ENCODE measurements at regions of chr9 and their contacts with region 1.

Region 1: DNA sequence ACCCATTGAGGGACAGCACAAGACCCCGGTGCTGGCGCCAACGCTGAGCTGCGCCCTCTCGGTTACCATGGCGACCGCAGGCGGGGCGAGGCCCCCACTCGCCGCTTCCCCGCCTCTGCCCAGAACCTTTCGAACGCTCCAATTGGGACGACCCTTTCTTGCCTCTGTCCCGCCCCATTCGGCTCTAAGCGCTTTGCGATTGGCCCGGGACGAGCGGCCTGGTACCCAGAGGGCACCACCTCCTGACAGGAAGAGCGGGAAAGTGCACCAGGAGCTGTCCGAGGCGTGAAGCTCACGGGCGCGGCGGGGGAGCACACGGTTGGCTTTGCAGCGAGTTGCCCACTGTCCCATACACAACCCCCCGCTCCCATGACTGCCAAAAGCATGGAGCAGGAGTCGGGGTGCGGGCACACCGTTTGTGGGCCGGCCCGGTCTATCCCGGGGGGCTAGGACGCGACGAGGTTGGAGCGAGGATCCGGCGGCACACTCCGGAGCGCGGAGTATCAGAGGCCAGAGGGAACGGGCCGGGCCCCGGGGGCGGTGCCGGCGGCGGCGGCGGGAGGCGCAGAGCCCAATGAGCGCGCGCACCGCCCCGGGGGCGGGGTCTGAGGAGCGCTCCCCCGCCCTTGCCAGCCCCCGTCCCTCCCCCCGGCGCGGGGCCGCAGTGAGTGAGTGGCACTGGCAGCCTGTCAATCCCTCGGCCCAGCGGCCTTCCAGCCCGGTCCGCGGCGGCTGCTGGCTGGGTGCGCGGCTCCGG is 978 bp upstream of the PBX3 start:
- DNase-seq: peak; percentile 96 to 98
- ATAC-seq: peak; percentile 95
- H3K4me3 ChIP-seq: peak overlapping the region; percentile 93 to 99
- H3K27ac ChIP-seq: peak overlapping the region; percentile 76 to 78
- H3K4me1 ChIP-seq: no peaks in the 10 kb centered on the region
- H3K27me3 ChIP-seq: no peaks in the 10 kb centered on the region

Region 2: GRCh38 chr9:125544988-125545651 is 201.1 kb before region 1 on chr9:
- intact Hi-C with region 1: loop called in 1 of 2 experiments (anchors 5 kb)
- DNase-seq: peak; percentile 67 to 82
- ATAC-seq: peak; percentile 72
- H3K4me3 ChIP-seq: no peak overlapping the region
- H3K27ac ChIP-seq: peak overlapping the region in 1 of 2 donors; percentile 64
- H3K4me1 ChIP-seq: peaks cover 11 to 15% of the 10 kb centered on the region in 2 donors
- H3K27me3 ChIP-seq: no peaks in the 10 kb centered on the region

Region 3: GRCh38 chr9:125706661-125707471 is 39.3 kb before region 1 on chr9 and contains the start of gene MAPKAP1:
- intact Hi-C with region 1: loop called (anchors 5 kb)
- DNase-seq: peak; percentile 99
- ATAC-seq: peak; percentile 99
- H3K4me3 ChIP-seq: peak within 1 kb of the TSS; percentile 91 to 93
- H3K27ac ChIP-seq: peak within 1 kb of the TSS; percentile 59 to 65
- H3K4me1 ChIP-seq: peaks cover 6 to 9% of the 10 kb centered on the region in 2 donors
- H3K27me3 ChIP-seq: peaks cover 0 to 1% of the 10 kb centered on the region in 2 donors
- total RNA-seq, gene MAPKAP1: 55.6 to 58.4 TPM

Measured in aorta (tissue), 5 donors.